ENCODE measurements at regions of chr17 and their contacts with region 1.

Region 1: DNA sequence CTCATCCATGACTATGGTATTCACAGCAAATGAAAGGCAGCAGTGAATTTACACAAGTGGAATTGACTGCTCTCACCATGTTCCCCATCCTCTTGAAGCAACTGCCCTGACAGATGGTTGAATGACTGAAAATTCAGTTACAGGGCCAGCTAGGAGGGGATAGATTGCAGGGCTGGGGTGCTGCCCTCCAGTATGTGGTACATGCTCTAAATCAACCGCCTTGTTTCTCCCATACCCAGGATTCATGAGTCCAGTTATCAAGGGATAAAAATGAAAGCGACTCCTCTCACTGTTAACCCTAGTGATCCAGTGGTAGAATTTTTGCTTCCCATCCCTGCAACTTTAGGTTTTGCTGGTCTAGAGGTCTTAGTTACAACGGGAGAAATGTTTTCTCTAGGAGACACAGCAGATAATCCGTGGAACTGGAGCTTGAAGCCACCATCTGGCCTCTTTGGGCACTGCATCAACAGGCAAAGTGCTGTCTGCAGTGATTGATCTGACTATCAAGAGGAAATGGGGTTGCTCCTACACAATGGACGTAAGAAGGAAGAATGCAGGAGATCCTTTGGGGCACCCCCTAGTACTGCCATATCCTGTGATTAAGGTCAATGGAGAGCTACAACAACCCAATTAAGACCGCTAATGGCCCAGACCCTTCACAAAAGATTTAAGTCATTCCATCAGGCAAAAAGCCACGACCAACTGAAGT is 32.0 kb downstream of the SCPEP1 start:
- DNase-seq: peak; percentile 72
- ATAC-seq: peak; percentile 57
- H3K4me3 ChIP-seq: peak overlapping the region in 3 of 5 experiments; percentile 41 to 54 (median 50)
- H3K4me3 Mint-ChIP-seq: peak overlapping the region; percentile 49
- H3K27ac ChIP-seq: no peak overlapping the region
- H3K27ac Mint-ChIP-seq: peak overlapping the region; percentile 32
- H3K4me1 ChIP-seq: peaks cover 20 to 21% of the 10 kb centered on the region in 2 donors
- H3K4me1 Mint-ChIP-seq: peaks cover 39% of the 10 kb centered on the region
- H3K27me3 ChIP-seq: no peaks in the 10 kb centered on the region
- H3K27me3 Mint-ChIP-seq: no peaks in the 10 kb centered on the region
- CTCF ChIP-seq: peak; percentile 81

Region 2: DNA sequence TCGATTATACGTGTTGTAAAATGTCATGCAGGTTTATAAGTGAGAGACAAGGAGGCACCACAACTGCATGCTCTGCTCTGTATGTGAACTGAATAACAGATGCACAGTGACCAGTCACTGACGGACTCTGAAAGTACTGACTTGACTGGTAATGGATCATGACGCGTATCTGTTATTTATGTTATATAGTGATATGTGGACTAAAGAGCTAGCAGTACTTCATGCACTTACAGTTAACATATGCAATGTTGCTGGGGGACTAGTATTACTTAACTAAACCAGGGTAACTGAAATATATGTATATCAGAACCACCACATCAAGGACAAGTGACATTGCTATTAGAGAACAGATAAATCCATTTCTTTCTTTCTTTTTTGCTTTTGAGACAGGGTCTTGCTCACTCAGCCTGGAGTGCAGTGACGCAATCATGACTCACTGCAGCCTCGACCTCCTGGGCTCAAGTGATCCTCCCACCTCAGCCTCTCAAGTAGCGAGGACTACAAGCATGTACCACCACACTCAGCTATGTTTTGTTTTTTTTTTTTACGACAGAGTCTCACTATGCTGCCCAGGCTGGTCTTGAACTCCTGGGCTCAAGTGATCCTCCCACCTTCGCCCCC is 66.3 kb before region 1 on chr17:
- CTCF ChIA-PET with region 1: no interaction called
- POLR2A ChIA-PET with region 1: no interaction called
- intact Hi-C with region 1: no loop called
- DNase-seq: no peak
- ATAC-seq: no peak
- H3K4me3 ChIP-seq: no peak overlapping the region
- H3K4me3 Mint-ChIP-seq: no peak overlapping the region
- H3K27ac ChIP-seq: no peak overlapping the region
- H3K27ac Mint-ChIP-seq: no peak overlapping the region
- H3K4me1 ChIP-seq: peaks cover 0 to 3% of the 10 kb centered on the region in 2 donors
- H3K4me1 Mint-ChIP-seq: peaks cover 4% of the 10 kb centered on the region
- H3K27me3 ChIP-seq: no peaks in the 10 kb centered on the region
- H3K27me3 Mint-ChIP-seq: no peaks in the 10 kb centered on the region
- CTCF ChIP-seq: no peak

Region 3: DNA sequence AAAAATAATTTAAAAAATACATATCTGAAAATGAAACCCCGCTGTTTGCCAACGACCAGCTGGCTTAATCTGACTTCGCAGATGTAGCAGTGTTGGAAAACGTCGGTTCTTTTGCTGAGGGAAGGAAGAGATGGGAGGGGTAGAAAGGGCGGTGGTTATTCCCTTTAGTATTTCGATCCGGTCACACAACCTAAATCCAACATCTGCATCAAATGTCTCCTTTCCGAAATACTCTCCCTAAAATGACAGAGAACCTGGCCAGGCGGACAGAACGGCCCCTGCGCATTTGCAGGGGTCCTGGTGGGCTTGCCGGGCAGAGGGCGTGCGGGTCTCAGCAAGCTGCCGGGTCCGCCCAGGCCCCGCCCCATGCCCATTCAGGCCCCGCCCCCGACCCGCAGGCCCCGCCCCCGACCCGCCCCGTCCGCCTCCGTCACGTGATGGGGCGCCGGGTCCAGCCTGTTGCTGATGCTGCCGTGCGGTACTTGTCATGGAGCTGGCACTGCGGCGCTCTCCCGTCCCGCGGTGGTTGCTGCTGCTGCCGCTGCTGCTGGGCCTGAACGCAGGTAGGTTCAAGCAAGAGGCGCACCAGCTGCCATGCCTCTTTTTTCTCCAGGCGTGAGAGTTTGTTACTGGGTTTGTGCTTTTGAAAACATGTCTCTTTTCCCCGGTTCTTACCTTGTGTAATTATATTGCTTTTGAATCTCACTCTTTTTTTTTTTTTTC is 32.1 kb before region 1 on chr17 and contains the start of gene SCPEP1:
- CTCF ChIA-PET with region 1: interaction called, 14 read pairs
- POLR2A ChIA-PET with region 1: interaction called, 21 read pairs
- intact Hi-C with region 1: loop called (anchors 1 kb)
- DNase-seq: peak; percentile 83
- ATAC-seq: peak; percentile 98
- H3K4me3 ChIP-seq: peak within 1 kb of the TSS; percentile 65 to 87 (median 74)
- H3K4me3 Mint-ChIP-seq: peak within 1 kb of the TSS; percentile 96
- H3K27ac ChIP-seq: peak within 1 kb of the TSS; percentile 44 to 76
- H3K27ac Mint-ChIP-seq: peak within 1 kb of the TSS; percentile 95
- H3K4me1 ChIP-seq: peaks cover 13 to 24% of the 10 kb centered on the region in 2 donors
- H3K4me1 Mint-ChIP-seq: peaks cover 34% of the 10 kb centered on the region
- H3K27me3 ChIP-seq: no peaks in the 10 kb centered on the region
- H3K27me3 Mint-ChIP-seq: no peaks in the 10 kb centered on the region
- CTCF ChIP-seq: no peak
- total RNA-seq, gene SCPEP1: 66.6 and 66.9 TPM in 2 replicates

Region 4: GRCh38 chr17:57045868-57046704 is 36.2 kb after region 1 on chr17:
- CTCF ChIA-PET with region 1: interaction called, 3 read pairs
- POLR2A ChIA-PET with region 1: interaction called, 3 read pairs
- intact Hi-C with region 1: loop called (anchors 2 kb)
- DNase-seq: peak; percentile 62
- ATAC-seq: peak; percentile 73
- H3K4me3 ChIP-seq: peak overlapping the region; percentile 21 to 69 (median 49)
- H3K4me3 Mint-ChIP-seq: peak overlapping the region; percentile 85
- H3K27ac ChIP-seq: no peak overlapping the region
- H3K27ac Mint-ChIP-seq: peak overlapping the region; percentile 50
- H3K4me1 ChIP-seq: peaks cover 24 to 26% of the 10 kb centered on the region in 2 donors
- H3K4me1 Mint-ChIP-seq: peaks cover 18% of the 10 kb centered on the region
- H3K27me3 ChIP-seq: peaks cover 0 to 34% (median 20%) of the 10 kb centered on the region in 4 experiments
- H3K27me3 Mint-ChIP-seq: peaks cover 35% of the 10 kb centered on the region
- CTCF ChIP-seq: no peak

Region 5: DNA sequence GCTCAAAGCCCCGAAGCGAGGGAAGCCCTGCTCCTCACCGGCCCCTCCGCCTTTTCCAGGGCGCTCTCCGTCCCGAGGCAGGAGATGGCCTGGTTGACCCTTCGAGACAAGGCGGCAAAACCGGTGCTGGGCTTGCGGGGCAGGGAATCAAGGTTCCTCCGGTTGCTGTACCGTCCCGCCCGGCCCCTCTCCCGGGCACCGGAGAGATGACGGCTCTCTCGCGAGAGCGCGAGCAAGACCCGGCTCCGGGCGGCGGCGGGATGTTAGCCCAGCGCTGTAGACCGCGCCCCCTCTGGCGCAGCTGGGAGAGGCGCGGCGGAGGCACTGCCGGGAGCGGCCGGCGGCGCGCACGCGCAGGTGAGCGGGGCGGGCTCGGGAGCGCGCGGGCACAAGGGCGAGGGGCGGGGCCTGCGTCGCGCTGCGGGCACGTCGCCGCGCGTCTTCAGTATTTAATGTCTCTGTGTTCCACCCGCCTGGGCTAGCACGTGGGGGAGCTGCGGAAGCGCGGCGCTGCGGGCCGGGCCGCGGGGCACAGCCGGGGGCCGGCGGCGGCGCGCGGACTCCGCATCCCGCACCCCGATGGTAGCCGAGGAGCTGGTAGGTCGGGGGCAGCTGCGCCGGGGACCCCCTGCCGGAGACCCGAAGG is 75.0 kb after region 1 on chr17 and contains the start of gene AKAP1:
- CTCF ChIA-PET with region 1: interaction called, 3 read pairs
- POLR2A ChIA-PET with region 1: no interaction called
- intact Hi-C with region 1: loop called (anchors 1 kb)
- DNase-seq: peak; percentile 97
- ATAC-seq: peak; percentile 85
- H3K4me3 ChIP-seq: peak within 1 kb of the TSS; percentile 71 to 95 (median 85)
- H3K4me3 Mint-ChIP-seq: peak within 1 kb of the TSS; percentile 95
- H3K27ac ChIP-seq: peak within 1 kb of the TSS; percentile 77 to 86
- H3K27ac Mint-ChIP-seq: peak within 1 kb of the TSS; percentile 91
- H3K4me1 ChIP-seq: peaks cover 14 to 16% of the 10 kb centered on the region in 2 donors
- H3K4me1 Mint-ChIP-seq: peaks cover 20% of the 10 kb centered on the region
- H3K27me3 ChIP-seq: peaks cover 0 to 3% (median 0%) of the 10 kb centered on the region in 4 experiments
- H3K27me3 Mint-ChIP-seq: no peaks in the 10 kb centered on the region
- CTCF ChIP-seq: no peak
- total RNA-seq, gene AKAP1: 20.1 and 27.1 TPM in 2 replicates